ENCODE measurements at regions of chr6 and their contacts with region 1.

Region 1: GRCh38 chr6:147506704-147507114 is 1.8 kb upstream of the SAMD5 start:
- DNase-seq: peak; percentile 45
- ATAC-seq: peak; percentile 33
- H3K4me3 ChIP-seq: peak overlapping the region; percentile 68
- H3K27ac ChIP-seq: no peak overlapping the region
- H3K4me1 ChIP-seq: peaks cover 3% of the 10 kb centered on the region; the same call in 1 of the 2 replicates
- H3K27me3 ChIP-seq: peaks cover 8% of the 10 kb centered on the region; the same call in 1 of the 2 replicates
- CTCF ChIP-seq: peak; percentile 90
- POLR2A ChIP-seq: no peak
- RAD21 ChIP-seq: peak; percentile 96

Region 2: GRCh38 chr6:146857180-146857979 is 649.3 kb before region 1 on chr6:
- CTCF ChIA-PET with region 1: interaction called, 3 read pairs
- POLR2A ChIA-PET with region 1: no interaction called
- dilution Hi-C with region 1: no loop called
- in situ Hi-C with region 1: no loop called
- intact Hi-C with region 1: loop called (anchors 10 kb)
- DNase-seq: peak; percentile 93
- ATAC-seq: peak; percentile 96
- H3K4me3 ChIP-seq: peak overlapping the region; percentile 27; the same call in 1 of the 2 replicates
- H3K27ac ChIP-seq: peak overlapping the region; percentile 79
- H3K4me1 ChIP-seq: peaks cover 3% of the 10 kb centered on the region; the same call in 1 of the 2 replicates
- H3K27me3 ChIP-seq: no peaks in the 10 kb centered on the region
- CTCF ChIP-seq: peak; percentile 97
- POLR2A ChIP-seq: peak; percentile 33; the same call in 1 of the 2 replicates
- RAD21 ChIP-seq: peak; percentile 99

Region 3: GRCh38 chr6:147522597-147522996 is 15.9 kb after region 1 on chr6:
- CTCF ChIA-PET with region 1: no interaction called
- POLR2A ChIA-PET with region 1: no interaction called
- dilution Hi-C with region 1: no loop called
- in situ Hi-C with region 1: no loop called
- intact Hi-C with region 1: no loop called
- DNase-seq: no peak
- ATAC-seq: no peak
- H3K4me3 ChIP-seq: no peak overlapping the region
- H3K27ac ChIP-seq: no peak overlapping the region
- H3K4me1 ChIP-seq: no peaks in the 10 kb centered on the region
- H3K27me3 ChIP-seq: no peaks in the 10 kb centered on the region
- CTCF ChIP-seq: no peak
- POLR2A ChIP-seq: no peak
- RAD21 ChIP-seq: no peak

Region 4: GRCh38 chr6:147752689-147753403 is 246.1 kb after region 1 on chr6:
- CTCF ChIA-PET with region 1: no interaction called
- POLR2A ChIA-PET with region 1: no interaction called
- dilution Hi-C with region 1: no loop called
- in situ Hi-C with region 1: no loop called
- intact Hi-C with region 1: loop called (anchors 5 kb)
- DNase-seq: peak; percentile 9
- ATAC-seq: peak; percentile 94
- H3K4me3 ChIP-seq: no peak overlapping the region
- H3K27ac ChIP-seq: peak overlapping the region; percentile 60; the same call in 1 of the 2 replicates
- H3K4me1 ChIP-seq: no peaks in the 10 kb centered on the region
- H3K27me3 ChIP-seq: no peaks in the 10 kb centered on the region
- CTCF ChIP-seq: no peak
- POLR2A ChIP-seq: no peak
- RAD21 ChIP-seq: no peak

Region 5: GRCh38 chr6:148144917-148145521 is 638.3 kb after region 1 on chr6:
- CTCF ChIA-PET with region 1: interaction called, 3 read pairs
- POLR2A ChIA-PET with region 1: no interaction called
- dilution Hi-C with region 1: no loop called
- in situ Hi-C with region 1: no loop called
- intact Hi-C with region 1: loop called (anchors 5 kb)
- DNase-seq: peak; percentile 73
- ATAC-seq: peak; percentile 81
- H3K4me3 ChIP-seq: no peak overlapping the region
- H3K27ac ChIP-seq: no peak overlapping the region
- H3K4me1 ChIP-seq: peaks cover 3% of the 10 kb centered on the region; the same call in 1 of the 2 replicates
- H3K27me3 ChIP-seq: no peaks in the 10 kb centered on the region; the same call in 1 of the 2 replicates
- CTCF ChIP-seq: peak; percentile 86
- POLR2A ChIP-seq: no peak
- RAD21 ChIP-seq: peak; percentile 64

Region 6: DNA sequence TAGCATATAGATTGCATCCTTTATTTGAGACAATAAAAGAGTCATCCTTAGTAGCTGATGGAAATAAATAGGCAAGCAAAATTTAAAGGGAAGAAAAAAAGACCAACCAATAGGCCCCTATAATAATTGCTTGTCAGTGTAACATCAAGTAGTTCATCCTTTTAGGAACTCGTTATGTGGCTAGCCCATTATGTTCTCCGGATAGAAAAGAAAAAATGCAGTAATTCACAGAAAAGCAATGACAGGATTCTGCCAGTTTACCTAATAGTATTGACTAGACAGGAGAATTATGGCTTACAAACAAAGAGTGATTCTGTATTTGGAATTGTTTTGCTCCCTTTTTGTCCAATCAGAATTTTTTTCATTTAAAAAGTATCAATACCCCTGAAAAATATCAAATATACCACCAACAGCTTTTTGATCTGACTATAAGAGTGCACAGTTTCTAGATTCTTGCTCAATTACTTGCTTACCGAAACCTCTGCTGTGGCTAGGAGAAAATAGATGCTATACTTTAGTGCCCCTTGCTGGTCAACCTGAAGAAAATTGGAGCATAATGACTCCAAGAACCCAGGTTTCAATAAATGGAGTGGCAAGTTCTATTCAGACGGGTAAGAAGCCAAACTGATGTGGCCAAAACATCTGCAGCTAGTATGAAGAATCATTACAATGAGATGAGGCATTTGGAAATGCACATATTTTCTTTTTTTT is 744.4 kb after region 1 on chr6:
- CTCF ChIA-PET with region 1: no interaction called
- POLR2A ChIA-PET with region 1: no interaction called
- dilution Hi-C with region 1: no loop called
- in situ Hi-C with region 1: no loop called
- intact Hi-C with region 1: loop called (anchors 1 kb)
- DNase-seq: peak; percentile 80
- ATAC-seq: peak; percentile 86
- H3K4me3 ChIP-seq: no peak overlapping the region
- H3K27ac ChIP-seq: no peak overlapping the region
- H3K4me1 ChIP-seq: peaks cover 2% of the 10 kb centered on the region; the same call in 1 of the 2 replicates
- H3K27me3 ChIP-seq: no peaks in the 10 kb centered on the region
- CTCF ChIP-seq: peak; percentile 62
- POLR2A ChIP-seq: no peak
- RAD21 ChIP-seq: peak; percentile 82